ENCODE measurements at regions of chr17 and their contacts with region 1.

Region 1: DNA sequence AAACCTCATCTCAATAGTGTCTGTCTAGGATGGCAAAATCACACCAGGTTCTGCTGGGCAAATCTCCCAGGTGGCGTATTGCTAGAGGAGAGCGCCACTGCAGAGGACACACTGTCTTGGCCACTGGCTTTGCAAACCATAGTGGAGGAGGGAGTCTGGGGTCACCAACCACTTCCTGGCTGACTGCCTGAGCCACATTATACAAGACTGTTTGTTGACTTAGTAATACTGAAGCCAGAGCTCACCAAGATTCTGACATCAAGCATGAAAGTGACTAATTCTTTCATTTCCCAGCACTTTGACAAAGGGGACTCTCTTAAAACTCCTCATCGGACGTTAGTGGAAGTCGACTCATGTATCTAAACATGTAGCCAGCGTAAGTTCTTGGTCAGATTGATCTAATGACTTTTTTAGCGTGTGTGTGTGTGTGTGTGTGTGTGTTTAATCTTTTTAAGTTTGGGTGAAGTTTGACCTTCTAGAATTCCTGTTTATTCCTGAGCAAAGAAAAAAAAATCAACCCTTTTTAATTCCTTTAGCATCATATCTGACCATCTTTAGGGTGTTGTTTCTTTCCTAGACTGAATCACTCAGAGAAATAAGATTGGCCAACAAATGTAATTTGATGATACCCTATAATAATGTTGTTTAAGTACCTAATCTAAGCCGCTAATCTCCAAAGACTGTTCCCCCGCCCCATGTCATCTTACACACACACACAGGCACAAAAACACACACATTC is 13.7 kb downstream of the PITPNC1 start:
- DNase-seq: peak; percentile 94
- ATAC-seq: peak; percentile 90
- H3K4me3 Mint-ChIP-seq: peak overlapping the region; percentile 78
- H3K27ac Mint-ChIP-seq: peak overlapping the region; percentile 95
- H3K4me1 Mint-ChIP-seq: peaks cover 75% of the 10 kb centered on the region
- H3K27me3 Mint-ChIP-seq: no peaks in the 10 kb centered on the region

Region 2: GRCh38 chr17:67121316-67121887 is 269.4 kb before region 1 on chr17:
- CTCF ChIA-PET with region 1: no interaction called
- DNase-seq: no peak
- ATAC-seq: no peak
- H3K4me3 Mint-ChIP-seq: no peak overlapping the region
- H3K27ac Mint-ChIP-seq: no peak overlapping the region
- H3K4me1 Mint-ChIP-seq: peaks cover 2% of the 10 kb centered on the region
- H3K27me3 Mint-ChIP-seq: no peaks in the 10 kb centered on the region

Region 3: DNA sequence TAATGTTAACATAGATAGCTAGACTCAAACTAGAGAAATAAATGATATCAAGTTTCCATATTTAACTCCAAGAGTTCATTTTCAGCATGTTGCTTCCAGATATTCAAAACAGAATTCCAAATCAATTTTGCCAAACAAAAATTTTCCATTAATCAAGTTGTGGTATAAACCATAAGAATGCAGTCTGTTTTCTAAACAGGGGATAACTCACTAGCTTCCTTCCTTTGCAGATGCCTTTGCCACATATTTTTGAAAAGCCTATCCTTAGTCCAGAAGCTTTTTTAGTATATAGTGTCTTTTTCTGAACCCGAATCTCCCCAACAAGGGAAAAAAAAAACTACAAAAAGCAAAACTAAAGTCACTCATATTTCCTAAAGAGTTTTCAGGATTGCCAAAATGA is 207.3 kb before region 1 on chr17:
- CTCF ChIA-PET with region 1: no interaction called
- DNase-seq: no peak
- ATAC-seq: no peak
- H3K4me3 Mint-ChIP-seq: no peak overlapping the region
- H3K27ac Mint-ChIP-seq: no peak overlapping the region
- H3K4me1 Mint-ChIP-seq: no peaks in the 10 kb centered on the region
- H3K27me3 Mint-ChIP-seq: no peaks in the 10 kb centered on the region

Region 4: DNA sequence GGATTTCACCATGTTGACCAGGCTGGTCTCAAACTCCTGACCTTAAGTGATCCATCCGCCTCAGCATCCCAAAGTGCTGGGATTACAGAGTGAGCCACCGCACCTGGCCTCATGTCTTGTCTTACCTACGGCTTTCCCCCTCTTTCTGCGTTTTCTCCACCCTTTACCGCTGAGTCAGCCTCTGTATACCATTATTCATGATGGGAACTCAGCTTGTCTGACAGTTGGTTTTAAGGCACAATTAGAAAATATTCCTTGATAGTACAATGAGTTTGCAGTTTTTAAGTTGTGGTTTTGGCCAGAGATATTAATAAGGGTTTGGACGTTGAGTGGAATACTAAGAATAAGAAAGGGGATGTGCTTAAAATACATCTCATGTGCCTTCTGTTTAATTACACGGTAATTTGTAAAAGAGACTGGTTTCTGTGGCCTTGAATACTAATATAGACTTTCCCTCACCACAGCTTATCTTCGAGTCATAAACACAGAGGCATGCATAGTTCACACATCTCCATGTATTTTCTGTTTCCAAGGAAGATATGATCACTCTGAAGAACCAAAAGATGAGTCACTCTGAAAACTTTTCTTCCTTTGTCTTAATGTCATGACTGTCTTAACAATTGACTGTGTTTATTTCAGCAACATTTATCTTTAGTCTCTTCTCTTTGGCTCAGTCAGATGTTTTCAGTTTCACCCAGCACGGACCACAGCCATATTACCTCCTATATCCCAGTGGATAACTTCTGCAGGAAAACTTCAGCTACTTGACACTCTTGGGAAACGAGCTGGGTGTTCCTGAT is 40.6 kb after region 1 on chr17:
- CTCF ChIA-PET with region 1: interaction called, 57 read pairs
- DNase-seq: no peak
- ATAC-seq: peak; percentile 52
- H3K4me3 Mint-ChIP-seq: no peak overlapping the region
- H3K27ac Mint-ChIP-seq: peak overlapping the region; percentile 76
- H3K4me1 Mint-ChIP-seq: peaks cover 62% of the 10 kb centered on the region
- H3K27me3 Mint-ChIP-seq: no peaks in the 10 kb centered on the region

Region 5: DNA sequence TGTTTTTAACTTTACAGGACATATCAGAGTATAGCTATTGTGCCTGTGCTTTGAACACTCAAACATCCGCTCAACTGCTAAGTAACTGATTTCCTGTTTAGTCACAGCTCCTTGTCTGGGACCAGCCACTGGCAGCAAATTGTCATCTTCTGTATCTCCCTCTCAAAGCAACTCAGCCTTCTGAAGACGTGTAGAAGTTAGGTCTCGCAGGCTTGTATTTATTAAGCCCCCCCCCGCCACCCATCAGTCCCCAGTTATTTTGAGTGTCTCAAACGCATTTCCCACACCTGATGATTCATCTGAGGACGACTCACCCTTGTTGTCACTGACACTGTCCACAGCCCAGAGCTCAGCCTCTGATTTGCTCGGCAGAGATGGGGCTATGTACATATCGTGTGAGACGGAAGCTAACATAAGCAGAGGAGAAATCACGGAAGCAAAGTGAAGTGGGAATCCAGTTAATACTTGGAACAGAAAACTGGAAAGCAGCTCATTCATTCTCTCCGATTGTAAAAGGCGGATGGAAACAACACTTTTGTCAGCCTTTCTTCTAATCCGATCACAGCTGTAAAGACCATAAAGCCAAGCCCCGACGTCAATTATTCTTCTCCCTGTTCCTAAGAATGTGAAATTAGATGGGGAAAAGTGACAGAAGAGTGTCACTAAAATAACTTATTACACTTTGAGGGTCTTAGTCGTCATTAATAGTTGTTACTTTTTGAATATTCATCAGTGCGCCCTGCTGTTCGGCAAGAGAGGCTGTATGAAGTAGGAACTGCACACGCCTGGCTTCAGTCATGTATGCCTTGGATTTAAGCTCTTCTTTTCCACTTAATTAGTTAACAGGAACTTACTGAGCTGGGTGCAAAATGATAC is 50.5 kb after region 1 on chr17:
- CTCF ChIA-PET with region 1: interaction called, 57 read pairs
- DNase-seq: peak; percentile 89
- ATAC-seq: peak; percentile 92
- H3K4me3 Mint-ChIP-seq: peak overlapping the region; percentile 73
- H3K27ac Mint-ChIP-seq: peak overlapping the region; percentile 99
- H3K4me1 Mint-ChIP-seq: peaks cover 55% of the 10 kb centered on the region
- H3K27me3 Mint-ChIP-seq: no peaks in the 10 kb centered on the region

Region 6: DNA sequence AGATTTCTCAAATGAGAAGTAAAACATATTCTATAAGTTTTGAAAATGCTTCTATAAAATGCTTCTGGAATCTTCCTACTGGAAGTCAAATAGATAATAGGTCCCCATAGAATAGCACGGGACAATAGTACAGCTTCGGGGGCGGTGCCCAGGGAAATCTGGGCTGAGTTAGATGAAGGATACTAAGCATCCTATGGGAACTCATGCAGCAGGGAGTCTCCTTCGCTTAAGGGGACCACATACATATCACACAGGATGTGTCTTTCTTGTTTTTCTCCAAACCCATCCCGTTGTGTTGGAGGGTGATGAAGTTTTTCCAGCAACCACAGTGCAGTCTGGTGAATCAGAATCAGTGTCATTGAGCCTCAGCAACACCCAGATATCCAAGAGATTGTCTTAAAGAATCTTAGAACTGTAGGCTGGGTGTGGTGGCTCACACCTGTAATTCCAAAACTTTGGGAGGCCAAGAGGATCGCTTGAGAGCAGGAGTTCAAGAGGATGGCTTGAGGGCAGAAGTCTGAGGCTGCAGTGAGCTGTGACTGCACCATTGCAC is 70.5 kb after region 1 on chr17:
- CTCF ChIA-PET with region 1: interaction called, 13 read pairs
- DNase-seq: no peak
- ATAC-seq: peak; percentile 49
- H3K4me3 Mint-ChIP-seq: no peak overlapping the region
- H3K27ac Mint-ChIP-seq: peak overlapping the region; percentile 18
- H3K4me1 Mint-ChIP-seq: peaks cover 47% of the 10 kb centered on the region
- H3K27me3 Mint-ChIP-seq: no peaks in the 10 kb centered on the region

Region 7: GRCh38 chr17:67469208-67469895 is 78.5 kb after region 1 on chr17:
- CTCF ChIA-PET with region 1: interaction called, 144 read pairs
- DNase-seq: peak; percentile 68
- ATAC-seq: peak; percentile 88
- H3K4me3 Mint-ChIP-seq: peak overlapping the region; percentile 57
- H3K27ac Mint-ChIP-seq: peak overlapping the region; percentile 83
- H3K4me1 Mint-ChIP-seq: peaks cover 61% of the 10 kb centered on the region
- H3K27me3 Mint-ChIP-seq: no peaks in the 10 kb centered on the region